SK-N-SH (cell line): ENCODE measurements at regions of chr12 and their contacts with region 1.

Region 1: GRCh38 chr12:109775172-109775881 is 57.9 kb downstream of the TRPV4 start:
- DNase-seq: peak; percentile 76
- H3K4me3 ChIP-seq: peak overlapping the region in 1 of 2 experiments; percentile 17; a peak in 1 of 4 replicates
- H3K27ac ChIP-seq: no peak overlapping the region
- H3K4me1 ChIP-seq: peaks cover 0 to 5% of the 10 kb centered on the region in 2 experiments; a peak in 1 of 4 replicates
- H3K27me3 ChIP-seq: no peaks in the 10 kb centered on the region
- CTCF ChIP-seq: peak; percentile 86
- EP300 ChIP-seq: no peak
- RAD21 ChIP-seq: peak; percentile 79

Region 2: GRCh38 chr12:109518820-109519665 is 256.3 kb before region 1 on chr12:
- CTCF ChIA-PET with region 1: interaction called, 28 read pairs
- POLR2A ChIA-PET with region 1: no interaction called
- DNase-seq: peak; percentile 81
- H3K4me3 ChIP-seq: peak overlapping the region in 1 of 2 experiments; percentile 26; a peak in 1 of 4 replicates
- H3K27ac ChIP-seq: peak overlapping the region; percentile 57 to 89
- H3K4me1 ChIP-seq: peaks cover 14 to 52% of the 10 kb centered on the region in 2 experiments; a peak in 3 of 4 replicates
- H3K27me3 ChIP-seq: no peaks in the 10 kb centered on the region
- CTCF ChIP-seq: peak; percentile 93
- EP300 ChIP-seq: no peak
- RAD21 ChIP-seq: peak; percentile 96

Region 3: GRCh38 chr12:109573029-109573913 is 202.1 kb before region 1 on chr12 and contains the starts of genes MMAB and MVK:
- CTCF ChIA-PET with region 1: interaction called, 13 read pairs
- POLR2A ChIA-PET with region 1: no interaction called
- DNase-seq: peak; percentile 98
- H3K4me3 ChIP-seq: peak within 1 kb of the TSS; percentile 66 to 77
- H3K27ac ChIP-seq: peak within 1 kb of the TSS; percentile 36 to 82; a peak in 3 of 4 replicates
- H3K4me1 ChIP-seq: peaks cover 0 to 14% of the 10 kb centered on the region in 2 experiments; a peak in 2 of 4 replicates
- H3K27me3 ChIP-seq: no peaks in the 10 kb centered on the region
- CTCF ChIP-seq: no peak
- EP300 ChIP-seq: no peak
- RAD21 ChIP-seq: no peak
- polyA plus RNA-seq, gene MMAB: 14.8 and 15.9 TPM in 2 replicates
- polyA plus RNA-seq, gene MVK: 6.3 and 7.0 TPM in 2 replicates

Region 4: GRCh38 chr12:109763201-109763841 is 12.0 kb before region 1 on chr12:
- CTCF ChIA-PET with region 1: interaction called, 49 read pairs
- POLR2A ChIA-PET with region 1: no interaction called
- DNase-seq: no peak
- H3K4me3 ChIP-seq: no peak overlapping the region
- H3K27ac ChIP-seq: no peak overlapping the region
- H3K4me1 ChIP-seq: peaks cover 0 to 47% of the 10 kb centered on the region in 2 experiments; a peak in 1 of 4 replicates
- H3K27me3 ChIP-seq: no peaks in the 10 kb centered on the region
- CTCF ChIP-seq: no peak
- EP300 ChIP-seq: no peak
- RAD21 ChIP-seq: no peak

Region 5: GRCh38 chr12:109833307-109834189 is 58.2 kb after region 1 on chr12 and contains the start of gene TRPV4:
- CTCF ChIA-PET with region 1: no interaction called
- POLR2A ChIA-PET with region 1: no interaction called
- DNase-seq: peak; percentile 87
- H3K4me3 ChIP-seq: peak within 1 kb of the TSS; percentile 55 to 66
- H3K27ac ChIP-seq: no peak within 1 kb of the TSS
- H3K4me1 ChIP-seq: no peaks in the 10 kb centered on the region; a peak in 1 of 4 replicates
- H3K27me3 ChIP-seq: no peaks in the 10 kb centered on the region
- CTCF ChIP-seq: no peak
- EP300 ChIP-seq: no peak
- RAD21 ChIP-seq: no peak
- polyA plus RNA-seq, gene TRPV4: 5.2 and 5.4 TPM in 2 replicates